Activated naive CD4-positive, alpha-beta T cell treated with anti-CD3 and anti-CD28 coated beads, Interleukin-2, amount 10 ng/mL, durations not matched to agents 7 days and 5 days (primary cell): ENCODE measurements at regions of chr14 and their contacts with region 1.

Region 1: GRCh38 chr14:70816525-70816924 is 7.2 kb upstream of the MAP3K9 start:
- DNase-seq: no peak
- H3K4me3 Mint-ChIP-seq: no peak overlapping the region
- H3K27ac Mint-ChIP-seq: no peak overlapping the region
- H3K4me1 Mint-ChIP-seq: peaks cover 15% of the 10 kb centered on the region
- H3K27me3 Mint-ChIP-seq: peaks cover 24% of the 10 kb centered on the region

Region 2: DNA sequence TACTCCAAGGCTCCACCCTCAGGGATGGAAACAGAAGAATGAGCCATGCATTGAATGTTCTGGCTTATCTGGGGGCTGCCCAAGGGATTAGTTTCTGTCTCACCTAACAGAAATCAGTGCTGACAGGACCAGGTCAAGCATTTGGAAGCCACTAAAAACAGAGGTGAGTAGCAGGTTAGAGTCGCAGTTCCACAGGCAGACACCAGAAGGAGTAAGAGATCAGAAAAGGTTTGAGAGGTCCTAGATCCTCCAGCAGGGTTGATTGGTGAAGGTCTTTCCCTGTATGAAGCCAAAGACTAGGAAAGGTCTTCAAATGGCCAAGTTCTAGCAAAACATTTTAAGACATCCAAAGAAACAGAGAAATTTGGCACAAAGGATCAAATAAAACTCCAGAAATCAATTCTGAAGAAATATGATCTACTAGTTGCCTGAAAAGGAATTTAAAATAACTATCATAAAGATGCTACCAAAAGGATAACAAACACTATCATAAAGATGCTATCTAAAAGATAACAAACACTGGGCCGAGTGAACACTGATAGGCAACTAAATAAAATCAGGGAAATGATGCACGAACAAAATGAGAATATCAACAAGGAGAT is 194.3 kb before region 1 on chr14:
- CTCF ChIA-PET with region 1: interaction called, 17 read pairs
- DNase-seq: peak; percentile 71
- H3K4me3 Mint-ChIP-seq: no peak overlapping the region
- H3K27ac Mint-ChIP-seq: no peak overlapping the region
- H3K4me1 Mint-ChIP-seq: no peaks in the 10 kb centered on the region
- H3K27me3 Mint-ChIP-seq: peaks cover 6% of the 10 kb centered on the region

Region 3: DNA sequence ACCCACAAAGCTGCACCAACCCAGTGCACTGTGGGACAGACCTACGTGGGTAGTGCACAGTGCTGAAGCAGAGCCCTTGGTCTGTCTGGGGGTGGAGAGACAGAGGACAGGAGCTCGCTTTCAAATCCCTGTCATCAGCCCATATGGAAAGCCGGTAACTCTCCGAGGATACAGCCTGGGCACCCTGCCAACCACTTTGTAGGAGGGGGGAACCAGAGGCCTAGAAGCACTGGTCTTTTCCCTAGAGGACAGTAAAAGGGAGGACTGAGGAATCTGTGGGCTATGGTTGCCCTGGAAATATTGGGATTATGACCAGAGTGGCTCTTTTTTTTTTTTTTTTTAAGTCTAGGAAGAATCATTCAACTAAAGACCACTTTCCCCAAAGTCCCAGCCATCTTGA is 81.5 kb before region 1 on chr14:
- CTCF ChIA-PET with region 1: no interaction called
- DNase-seq: no peak
- H3K4me3 Mint-ChIP-seq: no peak overlapping the region
- H3K27ac Mint-ChIP-seq: no peak overlapping the region
- H3K4me1 Mint-ChIP-seq: no peaks in the 10 kb centered on the region
- H3K27me3 Mint-ChIP-seq: no peaks in the 10 kb centered on the region

Region 4: GRCh38 chr14:70845601-70846000 is 29.1 kb after region 1 on chr14:
- CTCF ChIA-PET with region 1: no interaction called
- DNase-seq: no peak
- H3K4me3 Mint-ChIP-seq: no peak overlapping the region
- H3K27ac Mint-ChIP-seq: peak overlapping the region; percentile 38
- H3K4me1 Mint-ChIP-seq: no peaks in the 10 kb centered on the region
- H3K27me3 Mint-ChIP-seq: peaks cover 17% of the 10 kb centered on the region

Region 5: DNA sequence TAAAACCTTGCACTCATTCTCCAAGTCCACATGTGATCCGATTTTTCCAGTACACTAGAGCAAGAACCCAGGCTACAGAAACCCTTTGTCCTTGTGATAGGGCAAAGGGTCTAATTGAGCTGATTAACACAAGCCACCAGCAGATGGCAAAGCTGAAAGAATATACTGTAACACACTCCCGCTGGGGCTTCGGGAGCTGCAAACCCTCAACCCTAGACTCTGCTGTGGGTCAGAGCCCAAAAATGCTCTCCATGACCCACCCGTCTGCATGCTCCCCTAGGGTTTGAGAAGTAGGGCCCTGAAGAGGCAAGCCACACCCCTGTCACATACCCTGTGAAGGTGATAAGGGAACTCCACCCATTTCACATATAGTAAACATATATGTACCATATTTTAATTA is 57.1 kb after region 1 on chr14:
- CTCF ChIA-PET with region 1: interaction called, 14 read pairs
- DNase-seq: peak; percentile 36
- H3K4me3 Mint-ChIP-seq: no peak overlapping the region
- H3K27ac Mint-ChIP-seq: no peak overlapping the region
- H3K4me1 Mint-ChIP-seq: peaks cover 23% of the 10 kb centered on the region
- H3K27me3 Mint-ChIP-seq: no peaks in the 10 kb centered on the region

Region 6: GRCh38 chr14:70972107-70972976 is 155.8 kb after region 1 on chr14:
- CTCF ChIA-PET with region 1: interaction called, 44 read pairs
- DNase-seq: peak; percentile 90
- H3K4me3 Mint-ChIP-seq: no peak overlapping the region
- H3K27ac Mint-ChIP-seq: no peak overlapping the region
- H3K4me1 Mint-ChIP-seq: peaks cover 23% of the 10 kb centered on the region
- H3K27me3 Mint-ChIP-seq: no peaks in the 10 kb centered on the region